ENCODE measurements at regions of chr11 and their contacts with region 1.

Region 1: GRCh38 chr11:116563028-116563711 is 209.6 kb downstream of the BUD13 start:
- DNase-seq: peak; percentile 18
- H3K4me3 Mint-ChIP-seq: no peak overlapping the region
- H3K27ac Mint-ChIP-seq: no peak overlapping the region
- H3K4me1 Mint-ChIP-seq: peaks cover 12% of the 10 kb centered on the region
- H3K27me3 Mint-ChIP-seq: peaks cover 10% of the 10 kb centered on the region
- CTCF ChIP-seq: no peak

Region 2: GRCh38 chr11:116353589-116353988 is 209.6 kb before region 1 on chr11:
- CTCF ChIA-PET with region 1: no interaction called
- intact Hi-C with region 1: loop called (anchors 5 kb)
- DNase-seq: peak; percentile 3
- H3K4me3 Mint-ChIP-seq: no peak overlapping the region
- H3K27ac Mint-ChIP-seq: no peak overlapping the region
- H3K4me1 Mint-ChIP-seq: peaks cover 9% of the 10 kb centered on the region
- H3K27me3 Mint-ChIP-seq: peaks cover 40% of the 10 kb centered on the region
- CTCF ChIP-seq: no peak

Measured in Calu3 (cell line).